GM12878 (cell line): ENCODE measurements at regions of chr2 and their contacts with region 1.

Region 1: GRCh38 chr2:157076526-157077161 is 180.9 kb upstream of the GALNT5 start:
- DNase-seq: peak; percentile 5
- ATAC-seq: peak; percentile 78
- H3K4me3 ChIP-seq: no peak overlapping the region
- H3K27ac ChIP-seq: no peak overlapping the region
- H3K4me1 ChIP-seq: peaks cover 8% of the 10 kb centered on the region
- H3K27me3 ChIP-seq: no peaks in the 10 kb centered on the region; a peak in 1 of 4 replicates
- CTCF ChIP-seq: no peak
- EP300 ChIP-seq: no peak
- POLR2A ChIP-seq: no peak
- RAD21 ChIP-seq: no peak

Region 2: DNA sequence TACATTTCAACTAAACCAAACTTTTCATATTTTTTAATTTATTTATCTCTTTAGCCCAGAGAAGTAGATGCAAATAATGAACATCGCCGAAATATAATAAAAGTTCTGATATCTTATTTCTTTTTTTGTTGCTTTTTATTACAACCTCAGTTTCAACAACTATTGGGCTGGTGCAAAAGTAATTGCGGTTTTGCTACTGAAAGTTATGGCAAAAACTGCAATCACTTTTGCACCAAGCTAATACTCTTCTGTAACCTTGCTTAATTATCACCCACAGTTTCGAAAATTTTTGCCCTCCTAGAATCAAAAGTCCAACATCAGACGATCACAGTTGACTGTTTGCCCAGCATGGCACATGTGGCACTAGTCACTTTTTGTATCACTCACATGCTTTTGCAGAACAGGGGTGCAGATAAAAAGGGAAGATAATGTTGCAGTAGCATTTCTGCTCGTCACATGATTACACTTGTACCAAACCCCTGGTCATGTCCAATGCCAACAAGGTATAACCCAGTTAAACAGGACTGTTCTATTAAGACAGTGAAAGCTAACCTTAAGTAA is 61.5 kb before region 1 on chr2:
- CTCF ChIA-PET with region 1: no interaction called
- POLR2A ChIA-PET with region 1: no interaction called
- RAD21 ChIA-PET with region 1: no interaction called
- SMC1A ChIA-PET with region 1: no interaction called
- in situ Hi-C with region 1: no loop called
- intact Hi-C with region 1: no loop called
- DNase-seq: no peak
- ATAC-seq: no peak
- H3K4me3 ChIP-seq: no peak overlapping the region
- H3K27ac ChIP-seq: no peak overlapping the region
- H3K4me1 ChIP-seq: no peaks in the 10 kb centered on the region
- H3K27me3 ChIP-seq: no peaks in the 10 kb centered on the region; a peak in 1 of 4 replicates
- CTCF ChIP-seq: no peak
- EP300 ChIP-seq: no peak
- POLR2A ChIP-seq: no peak
- RAD21 ChIP-seq: no peak

Region 3: DNA sequence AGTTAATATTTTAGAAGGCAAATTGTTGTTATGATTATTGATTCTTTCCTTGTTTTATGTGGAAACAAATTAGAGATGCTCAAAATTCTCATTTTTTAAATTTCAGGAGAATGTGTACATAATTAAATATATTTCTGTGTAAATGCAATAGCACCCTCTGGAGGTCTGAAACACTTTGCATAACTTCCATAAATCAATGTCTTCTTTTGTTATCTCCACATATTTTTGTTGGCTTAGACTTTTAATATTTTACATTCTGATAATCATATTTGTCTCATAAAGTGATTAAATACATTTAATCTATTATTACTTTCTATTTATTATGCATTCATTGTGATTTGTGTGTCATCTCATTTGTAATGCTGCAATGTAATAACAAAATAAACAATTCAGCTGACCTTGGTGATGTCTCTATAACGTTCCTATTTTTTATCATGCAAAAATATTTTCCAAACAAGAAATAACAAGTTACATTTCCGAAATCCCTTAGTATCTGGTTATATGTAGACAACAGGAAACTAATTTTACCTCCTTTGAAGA is 20.9 kb before region 1 on chr2:
- CTCF ChIA-PET with region 1: interaction called, 6 read pairs
- POLR2A ChIA-PET with region 1: no interaction called
- RAD21 ChIA-PET with region 1: interaction called, 7 read pairs
- SMC1A ChIA-PET with region 1: interaction called, 12 read pairs
- in situ Hi-C with region 1: no loop called
- intact Hi-C with region 1: no loop called
- DNase-seq: no peak
- ATAC-seq: no peak
- H3K4me3 ChIP-seq: no peak overlapping the region
- H3K27ac ChIP-seq: no peak overlapping the region
- H3K4me1 ChIP-seq: no peaks in the 10 kb centered on the region
- H3K27me3 ChIP-seq: peaks cover 0 to 2% of the 10 kb centered on the region in 2 experiments; a peak in 1 of 4 replicates
- CTCF ChIP-seq: peak in 2 of 3 experiments; percentile 14 to 28; a peak in 3 of 6 replicates
- EP300 ChIP-seq: no peak
- POLR2A ChIP-seq: no peak
- RAD21 ChIP-seq: peak; percentile 42; the same call in 1 of the 2 replicates

Region 4: DNA sequence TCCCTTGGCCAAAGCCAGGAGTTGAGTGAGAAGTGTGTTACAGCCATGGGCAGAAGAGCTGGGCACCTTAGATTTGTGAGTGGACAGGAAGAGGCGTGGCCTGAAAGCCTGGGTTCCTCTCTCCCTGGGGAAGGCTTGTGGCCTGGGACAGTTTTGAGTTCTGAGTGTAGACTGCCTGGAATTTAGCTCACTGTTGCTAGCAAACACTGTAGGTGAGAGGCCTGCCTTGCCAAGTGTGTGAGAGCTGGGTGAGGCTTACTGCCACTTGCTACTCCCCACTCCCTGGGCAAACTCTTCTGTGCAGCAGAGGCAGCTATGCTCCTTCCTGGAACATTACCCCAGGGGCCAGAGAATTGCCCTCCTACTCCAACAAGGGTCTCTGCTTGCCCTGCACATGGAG is 30.8 kb after region 1 on chr2:
- CTCF ChIA-PET with region 1: no interaction called
- POLR2A ChIA-PET with region 1: no interaction called
- RAD21 ChIA-PET with region 1: no interaction called
- SMC1A ChIA-PET with region 1: no interaction called
- in situ Hi-C with region 1: no loop called
- intact Hi-C with region 1: no loop called
- DNase-seq: no peak
- ATAC-seq: peak; percentile 37; the same call in 2 of the 3 replicates
- H3K4me3 ChIP-seq: no peak overlapping the region
- H3K27ac ChIP-seq: no peak overlapping the region
- H3K4me1 ChIP-seq: no peaks in the 10 kb centered on the region
- H3K27me3 ChIP-seq: no peaks in the 10 kb centered on the region
- CTCF ChIP-seq: no peak
- EP300 ChIP-seq: no peak
- POLR2A ChIP-seq: no peak
- RAD21 ChIP-seq: no peak

Region 5: GRCh38 chr2:157150747-157151146 is 74.1 kb after region 1 on chr2:
- CTCF ChIA-PET with region 1: interaction called, 3 read pairs
- POLR2A ChIA-PET with region 1: no interaction called
- RAD21 ChIA-PET with region 1: no interaction called
- SMC1A ChIA-PET with region 1: interaction called, 10 read pairs
- in situ Hi-C with region 1: no loop called
- intact Hi-C with region 1: no loop called
- DNase-seq: peak; percentile 68
- ATAC-seq: peak; percentile 93
- H3K4me3 ChIP-seq: no peak overlapping the region
- H3K27ac ChIP-seq: peak overlapping the region; percentile 18; the same call in 1 of the 2 replicates
- H3K4me1 ChIP-seq: peaks cover 10% of the 10 kb centered on the region
- H3K27me3 ChIP-seq: no peaks in the 10 kb centered on the region
- CTCF ChIP-seq: no peak
- EP300 ChIP-seq: peak; percentile 77 to 83; a peak in 2 of 4 replicates
- POLR2A ChIP-seq: no peak
- RAD21 ChIP-seq: no peak

Region 6: DNA sequence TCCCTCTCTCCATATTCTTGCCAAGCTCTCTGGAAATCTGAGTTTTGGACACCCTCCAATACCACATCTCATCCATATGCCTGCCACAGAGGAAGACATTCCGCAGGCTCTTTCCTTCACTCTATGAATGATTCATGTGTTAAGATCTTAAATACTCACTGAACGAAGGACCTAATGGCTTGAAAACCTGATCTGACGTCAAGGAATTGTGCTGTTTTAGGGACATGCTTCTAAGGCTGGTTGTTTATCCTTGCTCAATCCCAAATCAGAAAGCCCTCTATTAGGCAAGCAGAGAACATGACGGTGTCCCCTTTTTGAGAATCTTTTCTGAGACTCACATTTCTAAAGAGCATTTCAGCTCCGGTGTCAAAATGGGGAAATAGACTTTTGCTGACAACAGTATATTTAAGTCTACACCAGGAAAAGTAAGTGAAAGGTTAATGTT is 97.1 kb after region 1 on chr2:
- CTCF ChIA-PET with region 1: no interaction called
- POLR2A ChIA-PET with region 1: no interaction called
- RAD21 ChIA-PET with region 1: no interaction called
- SMC1A ChIA-PET with region 1: no interaction called
- in situ Hi-C with region 1: no loop called
- intact Hi-C with region 1: no loop called
- DNase-seq: no peak
- ATAC-seq: no peak
- H3K4me3 ChIP-seq: no peak overlapping the region
- H3K27ac ChIP-seq: no peak overlapping the region
- H3K4me1 ChIP-seq: no peaks in the 10 kb centered on the region
- H3K27me3 ChIP-seq: no peaks in the 10 kb centered on the region; a peak in 1 of 4 replicates
- CTCF ChIP-seq: no peak
- EP300 ChIP-seq: no peak
- POLR2A ChIP-seq: no peak
- RAD21 ChIP-seq: no peak